T-cell (primary cell): ENCODE measurements at regions of chr2 and their contacts with region 1.

Region 1: DNA sequence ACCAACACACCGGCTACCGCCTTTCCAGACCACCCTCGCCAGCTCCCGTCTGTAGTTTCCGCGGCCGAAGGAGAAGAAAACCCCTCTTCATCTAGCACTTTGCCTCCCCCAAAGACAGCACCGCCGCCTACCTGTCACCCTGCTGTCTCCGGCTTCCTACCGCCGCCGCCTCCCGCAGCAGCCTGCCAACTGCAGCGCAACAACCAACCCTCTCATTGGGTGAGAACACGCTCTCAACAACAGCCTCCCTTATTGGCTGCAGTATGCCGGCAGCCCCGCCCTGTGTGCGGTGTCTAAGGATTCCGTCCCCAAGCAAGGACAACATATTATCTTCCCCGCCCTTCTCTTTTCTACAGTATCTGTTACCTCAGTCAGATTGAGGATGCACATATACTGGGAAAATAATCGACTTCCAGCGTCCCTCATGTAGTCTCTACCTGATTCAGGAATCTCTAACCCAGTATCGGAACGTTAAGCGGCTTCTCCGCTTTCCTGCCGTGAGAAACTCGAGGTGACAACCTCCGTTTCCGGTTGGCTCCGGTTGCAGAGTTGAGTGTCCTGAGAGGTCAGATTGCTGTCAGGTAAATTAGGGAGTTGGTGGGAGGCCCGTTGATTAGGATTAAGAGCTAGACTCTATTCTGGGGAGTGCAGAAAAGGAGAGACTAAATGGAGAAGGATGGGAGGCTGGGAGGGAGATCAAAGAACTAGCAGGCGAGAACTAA is at the starts of genes HYCC2 and NDUFB3:
- DNase-seq: peak; percentile 80 to 98 (median 92)
- ATAC-seq: peak; percentile 96 to 98 (median 96)
- H3K4me3 ChIP-seq: peak within 1 kb of the TSS; percentile 71 to 96
- H3K4me3 Mint-ChIP-seq: peak within 1 kb of the TSS; percentile 92 to 95 (median 94)
- H3K27ac ChIP-seq: peak within 1 kb of the TSS; percentile 65
- H3K27ac Mint-ChIP-seq: peak within 1 kb of the TSS; percentile 91 to 96
- H3K4me1 ChIP-seq: peaks cover 10 to 28% of the 10 kb centered on the region in 2 experiments
- H3K4me1 Mint-ChIP-seq: peaks cover 55 to 60% (median 58%) of the 10 kb centered on the region in 3 donors
- H3K27me3 ChIP-seq: no peaks in the 10 kb centered on the region
- H3K27me3 Mint-ChIP-seq: no peaks in the 10 kb centered on the region
- total RNA-seq, gene HYCC2: 29.5 to 44.6 (median 36.0) TPM
- total RNA-seq, gene NDUFB3: 31.4 to 43.7 (median 38.8) TPM

Region 2: GRCh38 chr2:200713003-200713703 is 358.5 kb before region 1 on chr2:
- CTCF ChIA-PET with region 1: interaction called in 1 of 2 experiments, 16 read pairs
- POLR2A ChIA-PET with region 1: no interaction called
- DNase-seq: peak; percentile 72 to 96 (median 91)
- ATAC-seq: peak; percentile 98 to 100 (median 100)
- H3K4me3 ChIP-seq: peak overlapping the region; percentile 26 to 41
- H3K4me3 Mint-ChIP-seq: peak overlapping the region; percentile 60 to 71 (median 64)
- H3K27ac ChIP-seq: peak overlapping the region; percentile 97
- H3K27ac Mint-ChIP-seq: peak overlapping the region; percentile 98 to 99
- H3K4me1 ChIP-seq: peaks cover 2 to 9% of the 10 kb centered on the region in 2 experiments
- H3K4me1 Mint-ChIP-seq: peaks cover 8 to 15% (median 13%) of the 10 kb centered on the region in 3 donors
- H3K27me3 ChIP-seq: no peaks in the 10 kb centered on the region
- H3K27me3 Mint-ChIP-seq: peaks cover 0 to 6% of the 10 kb centered on the region in 2 donors

Region 3: GRCh38 chr2:200901459-200902072 is 170.1 kb before region 1 on chr2:
- CTCF ChIA-PET with region 1: interaction called in 1 of 2 experiments, 20 read pairs
- POLR2A ChIA-PET with region 1: interaction called in 1 of 2 experiments, 8 read pairs
- DNase-seq: peak; percentile 34 to 89 (median 69)
- ATAC-seq: peak; percentile 100
- H3K4me3 ChIP-seq: no peak overlapping the region
- H3K4me3 Mint-ChIP-seq: no peak overlapping the region
- H3K27ac ChIP-seq: peak overlapping the region; percentile 34
- H3K27ac Mint-ChIP-seq: peak overlapping the region; percentile 4 to 43
- H3K4me1 ChIP-seq: peaks cover 0 to 2% of the 10 kb centered on the region in 2 experiments
- H3K4me1 Mint-ChIP-seq: peaks cover 7 to 8% (median 7%) of the 10 kb centered on the region in 3 donors
- H3K27me3 ChIP-seq: no peaks in the 10 kb centered on the region
- H3K27me3 Mint-ChIP-seq: no peaks in the 10 kb centered on the region

Region 4: DNA sequence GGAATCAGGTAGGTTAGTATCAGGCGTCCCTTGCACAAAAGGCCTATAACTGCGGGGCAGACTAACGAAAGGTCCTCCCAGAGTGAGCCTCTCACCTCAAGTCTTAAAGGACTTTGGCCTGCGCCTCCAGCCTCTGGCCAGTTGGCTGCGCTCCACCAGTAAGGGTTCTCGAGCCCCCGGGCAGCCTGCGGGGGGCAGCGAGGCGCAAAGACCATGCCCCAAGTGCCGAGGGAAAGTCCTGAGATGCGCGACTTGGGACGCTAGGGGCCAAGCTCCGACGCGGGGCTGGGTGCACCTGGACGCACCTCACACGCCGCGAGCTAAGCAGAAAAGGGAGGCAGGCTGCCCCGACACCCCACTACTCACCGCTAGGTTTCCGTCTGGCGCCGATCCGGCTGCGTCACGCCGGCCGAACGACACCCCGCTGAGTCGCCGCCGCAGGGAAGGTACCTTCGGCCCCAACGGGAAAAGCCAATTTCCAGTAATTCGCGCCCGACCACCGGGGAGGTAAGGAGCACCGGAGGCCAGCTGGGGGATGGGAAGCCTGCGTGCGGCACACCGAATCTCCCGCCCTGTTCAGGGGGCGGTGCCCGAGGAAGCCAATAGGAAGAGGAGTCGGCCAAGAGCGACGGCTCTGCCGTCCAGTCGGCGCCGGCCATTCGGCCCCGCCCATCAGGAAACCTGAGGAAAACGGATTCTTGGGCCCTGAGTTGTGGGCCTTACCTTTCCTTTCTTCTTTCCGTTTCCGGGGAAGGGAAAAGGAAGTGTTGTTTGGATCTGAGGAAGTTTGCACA is 108.3 kb before region 1 on chr2 and contains the start of gene ORC2:
- CTCF ChIA-PET with region 1: interaction called, 11 to 66 read pairs
- POLR2A ChIA-PET with region 1: interaction called in 1 of 2 experiments, 5 read pairs
- DNase-seq: peak; percentile 78 to 95 (median 90)
- ATAC-seq: peak; percentile 95 to 97 (median 96)
- H3K4me3 ChIP-seq: peak within 1 kb of the TSS; percentile 72 to 92
- H3K4me3 Mint-ChIP-seq: peak within 1 kb of the TSS; percentile 97 to 99 (median 98)
- H3K27ac ChIP-seq: peak within 1 kb of the TSS; percentile 78
- H3K27ac Mint-ChIP-seq: peak within 1 kb of the TSS; percentile 98 to 100
- H3K4me1 ChIP-seq: peaks cover 19 to 21% of the 10 kb centered on the region in 2 experiments
- H3K4me1 Mint-ChIP-seq: peaks cover 70 to 74% (median 71%) of the 10 kb centered on the region in 3 donors
- H3K27me3 ChIP-seq: no peaks in the 10 kb centered on the region
- H3K27me3 Mint-ChIP-seq: no peaks in the 10 kb centered on the region
- total RNA-seq, gene ORC2: 29.9 to 52.4 (median 50.6) TPM

Region 5: DNA sequence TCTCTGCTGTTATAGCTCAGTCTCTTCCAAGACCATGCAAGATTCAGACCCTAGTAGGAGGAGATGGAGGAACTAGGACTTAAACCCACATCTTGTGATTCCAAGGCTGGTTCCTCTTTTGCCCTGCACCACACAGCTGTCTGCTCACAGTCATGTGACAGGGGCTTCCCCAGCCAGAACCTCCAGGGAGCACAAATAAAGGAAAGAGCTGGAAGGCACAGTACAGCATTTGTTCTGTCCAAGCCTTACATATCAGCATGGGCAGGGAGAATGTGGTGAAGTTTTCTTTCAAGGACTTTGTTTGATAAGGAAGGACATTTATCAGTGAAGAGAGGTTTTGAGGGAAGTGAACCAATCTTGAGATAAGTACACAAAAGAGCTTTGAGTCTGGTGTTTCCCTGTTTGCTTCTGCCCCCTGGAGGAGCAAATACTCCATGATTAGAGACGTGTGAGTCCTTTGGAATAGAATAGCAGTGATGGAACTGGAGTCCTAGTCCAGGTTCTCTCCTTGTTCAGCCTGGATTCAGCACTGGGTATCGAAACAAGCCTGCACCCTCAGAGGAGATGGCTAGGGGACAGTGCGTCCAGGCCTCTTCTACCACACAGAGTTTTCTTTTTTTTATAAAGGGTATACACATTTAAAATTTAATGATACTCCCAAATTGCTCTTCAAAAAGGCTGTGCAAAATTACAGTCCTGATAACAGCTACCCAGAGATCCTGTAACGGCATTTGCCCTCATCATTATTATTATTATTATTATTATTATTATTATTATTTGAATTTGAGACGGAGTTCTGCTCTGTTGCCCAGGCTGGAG is 86.7 kb after region 1 on chr2:
- CTCF ChIA-PET with region 1: interaction called, 12 to 14 read pairs
- POLR2A ChIA-PET with region 1: no interaction called
- DNase-seq: peak in 34 of 35 experiments; percentile 25 to 81 (median 58)
- ATAC-seq: peak; percentile 84 to 95 (median 86)
- H3K4me3 ChIP-seq: no peak overlapping the region
- H3K4me3 Mint-ChIP-seq: no peak overlapping the region
- H3K27ac ChIP-seq: peak overlapping the region; percentile 71
- H3K27ac Mint-ChIP-seq: peak overlapping the region; percentile 85 to 88
- H3K4me1 ChIP-seq: peaks cover 0 to 12% of the 10 kb centered on the region in 2 experiments
- H3K4me1 Mint-ChIP-seq: peaks cover 17 to 30% (median 18%) of the 10 kb centered on the region in 3 donors
- H3K27me3 ChIP-seq: no peaks in the 10 kb centered on the region
- H3K27me3 Mint-ChIP-seq: no peaks in the 10 kb centered on the region

Region 6: DNA sequence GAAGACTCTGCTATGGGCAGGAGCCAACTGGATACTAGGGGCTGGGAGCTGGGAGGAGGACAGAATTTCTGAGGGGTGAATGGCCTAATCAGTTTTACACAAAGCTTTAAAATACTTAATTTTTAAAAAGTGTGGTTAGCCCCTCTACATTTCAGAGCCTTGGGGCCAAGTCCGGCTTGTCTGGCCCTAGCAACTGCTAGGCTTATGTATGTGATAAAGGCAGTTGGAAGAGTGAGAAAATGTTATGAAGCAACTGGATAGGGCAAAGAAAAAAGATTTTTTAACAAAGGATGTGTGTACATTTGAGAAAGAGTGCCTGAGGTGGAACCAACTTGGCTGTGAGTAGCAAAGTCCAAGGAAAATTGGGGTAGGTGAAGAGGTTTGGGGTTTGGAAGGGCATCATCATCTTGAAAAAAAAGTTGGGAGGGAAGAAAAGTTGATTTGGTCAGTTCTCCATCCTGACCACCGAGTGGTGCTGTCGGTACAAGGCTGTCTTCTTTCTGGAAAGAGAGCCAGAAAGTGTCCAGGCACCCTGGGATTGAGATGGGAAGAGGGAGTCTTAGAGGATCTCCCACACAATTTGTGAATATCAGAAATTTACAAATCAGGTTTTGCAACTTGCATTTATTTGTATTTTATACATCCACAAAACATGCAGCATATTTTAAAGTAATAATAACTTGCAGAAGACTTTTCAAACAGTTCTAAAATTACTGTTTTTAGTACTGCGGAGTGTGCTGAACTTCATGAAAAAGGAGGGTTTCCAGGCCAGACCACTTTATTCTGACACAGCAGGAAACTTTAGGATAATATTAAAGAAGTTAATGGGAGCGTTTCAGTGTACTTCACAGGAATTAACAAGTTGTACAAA is 724.2 kb after region 1 on chr2:
- CTCF ChIA-PET with region 1: no interaction called
- POLR2A ChIA-PET with region 1: no interaction called
- DNase-seq: no peak
- ATAC-seq: no peak
- H3K4me3 ChIP-seq: no peak overlapping the region
- H3K4me3 Mint-ChIP-seq: no peak overlapping the region
- H3K27ac ChIP-seq: no peak overlapping the region
- H3K27ac Mint-ChIP-seq: no peak overlapping the region
- H3K4me1 ChIP-seq: no peaks in the 10 kb centered on the region
- H3K4me1 Mint-ChIP-seq: no peaks in the 10 kb centered on the region
- H3K27me3 ChIP-seq: peaks cover 0 to 3% of the 10 kb centered on the region in 2 experiments
- H3K27me3 Mint-ChIP-seq: peaks cover 2 to 9% of the 10 kb centered on the region in 2 donors